Gastrocnemius medialis (tissue), 4 donors: ENCODE measurements at regions of chr4 and their contacts with region 1.

Region 1: DNA sequence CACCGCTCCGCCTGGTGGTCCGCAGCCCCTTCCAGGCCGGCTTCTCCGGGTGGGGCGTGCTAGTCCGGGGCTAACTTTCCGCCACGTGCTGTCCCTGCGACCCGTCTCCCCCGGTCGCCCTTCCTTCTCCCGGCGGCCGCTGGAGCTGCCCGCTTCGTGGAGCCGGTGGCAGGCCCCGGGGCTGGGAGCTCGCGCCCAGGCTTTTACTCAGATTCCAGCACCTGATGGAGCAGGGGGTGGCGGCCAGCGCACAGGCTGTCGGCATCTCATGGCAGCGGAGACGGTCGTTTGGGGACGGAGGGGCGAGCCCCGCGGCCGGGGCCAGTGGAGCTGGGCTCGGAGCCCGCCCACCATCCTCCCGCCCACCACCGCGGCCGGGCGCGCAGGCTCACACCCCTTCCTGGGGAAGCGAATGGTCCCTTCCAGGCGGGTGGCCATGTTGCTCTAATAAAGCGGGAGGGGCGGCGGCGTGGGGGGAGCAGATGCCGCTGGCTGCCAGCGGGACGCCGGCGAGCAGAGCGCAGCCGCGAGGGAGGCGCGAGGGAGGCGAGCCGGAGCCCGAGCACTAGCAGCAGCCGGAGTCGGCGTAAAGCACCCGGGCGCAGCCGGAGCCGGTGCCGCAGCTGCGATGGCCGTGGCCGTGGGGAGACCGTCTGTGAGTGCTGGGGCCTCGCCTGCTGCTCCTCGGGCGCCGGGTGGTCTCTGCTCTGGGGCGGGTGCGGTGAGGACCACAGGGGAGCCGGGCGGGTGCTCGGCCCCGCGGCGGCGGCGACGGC is at the start of gene SEPTIN11:
- DNase-seq: peak; percentile 83 to 86
- ATAC-seq: peak; percentile 79 to 80
- H3K4me3 ChIP-seq: peak within 1 kb of the TSS; percentile 79 to 97 (median 90)
- H3K27ac ChIP-seq: peak within 1 kb of the TSS; percentile 88 to 96 (median 94)
- H3K4me1 ChIP-seq: peaks cover 18 to 19% of the 10 kb centered on the region in 2 donors
- H3K27me3 ChIP-seq: no peaks in the 10 kb centered on the region
- CTCF ChIP-seq: peak in 1 of 5 experiments; percentile 19
- POLR2A ChIP-seq: peak; percentile 85 to 92
- total RNA-seq, gene SEPTIN11: 11.3 to 104 (median 47.9) TPM

Region 2: DNA sequence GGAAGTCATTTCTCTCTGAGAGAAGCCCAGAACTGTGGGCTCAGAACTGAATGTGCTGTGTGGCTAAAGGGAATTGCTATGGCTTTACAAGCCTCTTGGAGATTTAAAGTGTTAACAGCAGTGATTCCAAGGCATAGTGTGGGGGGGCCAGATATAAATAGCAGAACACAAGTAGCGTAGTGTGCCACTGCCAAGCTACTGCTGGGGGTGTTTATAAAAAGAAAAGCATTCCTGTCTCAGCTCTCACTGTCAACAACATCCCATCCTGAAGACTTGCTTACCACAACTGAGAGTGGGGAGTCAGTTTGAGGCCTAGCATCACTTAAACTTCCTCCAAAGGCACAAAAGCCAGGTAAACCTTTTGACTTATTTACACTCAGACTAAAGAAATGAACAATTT is 875.0 kb before region 1 on chr4 and contains the start of gene ART3:
- in situ Hi-C with region 1: no loop called
- intact Hi-C with region 1: loop called (anchors 10 kb)
- DNase-seq: peak; percentile 71 to 77
- ATAC-seq: peak; percentile 76 to 82
- H3K4me3 ChIP-seq: peak within 1 kb of the TSS; percentile 44 to 61 (median 50)
- H3K27ac ChIP-seq: peak within 1 kb of the TSS; percentile 80 to 93 (median 84)
- H3K4me1 ChIP-seq: peaks cover 29 to 36% of the 10 kb centered on the region in 2 donors
- H3K27me3 ChIP-seq: no peaks in the 10 kb centered on the region
- CTCF ChIP-seq: no peak
- POLR2A ChIP-seq: peak; percentile 28 to 90
- total RNA-seq, gene ART3: 55.2 to 91.0 (median 83.4) TPM

Region 3: DNA sequence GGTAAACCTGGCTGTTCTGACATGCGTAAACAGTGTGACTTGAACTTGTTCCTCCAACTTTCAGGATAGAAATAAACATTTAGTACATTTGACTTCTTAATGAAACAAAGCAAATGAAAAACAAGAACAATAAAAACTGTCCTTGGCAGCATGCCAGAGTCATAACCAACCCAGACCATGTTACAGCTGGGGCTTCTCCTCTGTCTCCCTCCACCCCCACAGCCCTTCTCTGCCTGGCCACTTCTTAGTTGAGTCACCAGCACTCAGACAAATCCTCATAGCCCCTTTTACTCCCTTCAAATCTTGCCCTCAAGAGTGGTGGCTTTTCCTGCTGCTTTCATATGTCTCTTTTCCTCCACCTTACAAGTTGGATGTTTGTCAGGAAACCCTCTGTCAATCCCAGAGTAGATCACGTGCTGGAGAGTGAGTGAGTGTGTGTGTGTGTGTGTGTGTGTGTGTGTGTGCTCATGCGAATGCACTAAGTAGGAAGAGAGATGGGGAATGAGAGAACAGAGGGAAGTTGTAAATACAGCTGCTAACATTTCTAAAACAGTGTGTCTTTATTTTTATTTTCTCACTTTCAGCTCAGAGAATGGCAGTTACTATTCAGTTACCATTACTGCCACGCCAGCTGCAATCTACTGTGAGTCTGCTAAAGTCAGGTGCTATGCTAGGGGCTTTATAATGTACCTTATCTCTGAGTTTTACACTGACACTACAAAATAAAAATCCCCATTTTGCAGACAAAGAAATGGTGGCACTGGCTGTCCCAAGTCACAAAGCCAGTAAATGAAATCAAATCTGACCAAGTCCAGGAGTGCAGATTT is 750.8 kb before region 1 on chr4:
- in situ Hi-C with region 1: loop called in 1 of 4 experiments (anchors 25 kb)
- intact Hi-C with region 1: loop called (anchors 10 kb)
- DNase-seq: peak; percentile 74 to 77
- ATAC-seq: peak; percentile 41
- H3K4me3 ChIP-seq: peak overlapping the region in 3 of 4 donors; percentile 9 to 39 (median 15)
- H3K27ac ChIP-seq: peak overlapping the region; percentile 90 to 97 (median 96)
- H3K4me1 ChIP-seq: peaks cover 94 to 97% of the 10 kb centered on the region in 2 donors
- H3K27me3 ChIP-seq: no peaks in the 10 kb centered on the region
- CTCF ChIP-seq: no peak
- POLR2A ChIP-seq: no peak

Region 4: DNA sequence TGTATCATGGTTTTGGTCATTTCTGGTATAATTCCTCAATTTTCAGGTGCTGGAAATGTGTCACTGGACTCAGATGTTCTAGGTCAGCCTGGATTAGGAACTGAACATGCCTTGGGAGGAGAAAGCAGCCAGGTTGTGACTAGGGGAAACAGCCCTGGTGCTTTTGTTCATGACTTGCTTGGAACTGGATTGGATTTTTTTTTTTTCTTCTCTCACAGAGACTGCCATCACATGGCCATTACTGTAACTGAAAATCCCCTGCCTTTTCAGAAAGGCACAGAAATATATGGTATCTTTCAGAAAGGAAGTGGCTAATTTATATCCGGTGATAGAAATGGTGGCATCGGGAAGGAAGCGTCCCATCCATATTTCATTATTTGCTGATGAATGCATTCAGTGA is 34.7 kb after region 1 on chr4:
- in situ Hi-C with region 1: no loop called
- intact Hi-C with region 1: loop called (anchors 2 kb)
- DNase-seq: no peak
- ATAC-seq: peak; percentile 15 to 27
- H3K4me3 ChIP-seq: no peak overlapping the region
- H3K27ac ChIP-seq: peak overlapping the region; percentile 54 to 71 (median 62)
- H3K4me1 ChIP-seq: peaks cover 26 to 37% of the 10 kb centered on the region in 2 donors
- H3K27me3 ChIP-seq: no peaks in the 10 kb centered on the region
- CTCF ChIP-seq: no peak
- POLR2A ChIP-seq: no peak

Region 5: DNA sequence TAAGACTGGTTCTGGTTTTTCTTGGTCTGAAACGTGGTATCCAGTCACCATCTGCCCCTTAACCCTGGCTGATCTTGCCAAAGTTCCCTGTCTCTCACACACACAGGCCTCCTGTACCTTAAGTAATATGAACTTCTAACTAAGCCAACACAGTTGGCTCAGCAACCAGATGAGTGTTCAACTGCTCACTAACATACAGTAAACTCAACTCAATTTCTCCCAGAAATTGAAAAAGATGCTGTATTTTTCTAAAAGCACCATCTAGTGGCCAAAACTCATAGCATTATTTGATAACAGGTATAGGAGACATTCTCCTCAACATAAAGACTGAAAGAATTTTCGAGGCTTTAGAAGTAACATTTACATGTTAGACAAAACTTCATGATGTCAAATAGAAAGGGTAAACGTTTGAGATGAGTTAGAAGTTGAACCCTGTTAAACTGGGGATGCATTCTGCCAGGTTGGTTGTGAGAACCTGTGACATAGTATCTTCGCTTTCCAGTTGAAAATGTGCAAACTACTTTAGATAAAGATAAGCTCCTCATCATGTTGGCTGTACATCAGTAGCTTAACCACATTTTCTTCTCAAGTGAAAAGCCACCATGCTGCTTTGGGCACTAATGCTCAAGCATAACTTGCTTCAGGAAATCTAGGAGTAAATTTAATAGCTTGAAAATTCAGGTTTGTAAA is 95.1 kb after region 1 on chr4:
- in situ Hi-C with region 1: no loop called
- intact Hi-C with region 1: loop called (anchors 2 kb)
- DNase-seq: no peak
- ATAC-seq: no peak
- H3K4me3 ChIP-seq: no peak overlapping the region
- H3K27ac ChIP-seq: peak overlapping the region in 1 of 4 donors; percentile 34
- H3K4me1 ChIP-seq: peaks cover 10 to 11% of the 10 kb centered on the region in 2 donors
- H3K27me3 ChIP-seq: no peaks in the 10 kb centered on the region
- CTCF ChIP-seq: peak; percentile 24 to 53 (median 43)
- POLR2A ChIP-seq: no peak

Region 6: DNA sequence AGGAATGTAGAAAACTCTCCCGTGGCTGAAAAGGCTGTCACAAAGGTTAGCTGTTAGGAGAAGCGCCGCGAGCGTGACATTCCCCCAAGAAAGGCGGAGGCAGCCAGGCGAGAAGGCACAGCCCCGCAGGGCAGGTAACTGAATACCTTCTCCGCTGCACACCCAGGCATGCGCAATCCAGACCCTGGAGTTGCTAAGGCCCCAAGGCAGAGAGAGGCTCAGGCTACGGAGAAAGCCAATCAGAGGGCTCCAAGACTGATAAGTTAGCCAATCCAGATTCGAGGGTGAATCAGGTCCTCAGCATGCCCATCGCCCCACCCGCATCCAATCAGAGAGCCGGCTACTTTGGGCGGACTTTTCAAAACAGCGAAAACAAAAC is 207.1 kb after region 1 on chr4:
- in situ Hi-C with region 1: no loop called
- intact Hi-C with region 1: loop called (anchors 5 kb)
- DNase-seq: peak; percentile 96 to 98
- ATAC-seq: peak; percentile 99
- H3K4me3 ChIP-seq: peak overlapping the region; percentile 73 to 92 (median 82)
- H3K27ac ChIP-seq: peak overlapping the region; percentile 76 to 87 (median 83)
- H3K4me1 ChIP-seq: peaks cover 0 to 19% of the 10 kb centered on the region in 2 donors
- H3K27me3 ChIP-seq: no peaks in the 10 kb centered on the region
- CTCF ChIP-seq: no peak
- POLR2A ChIP-seq: no peak